ENCODE measurements at regions of chr1 and their contacts with region 1.

Region 1: GRCh38 chr1:40951943-40952743 is 27.4 kb upstream of the CTPS1 start:
- DNase-seq: peak; percentile 66
- H3K4me3 ChIP-seq: no peak overlapping the region
- H3K27ac ChIP-seq: no peak overlapping the region
- H3K4me1 ChIP-seq: peaks cover 11% of the 10 kb centered on the region
- H3K27me3 ChIP-seq: peaks cover 21% of the 10 kb centered on the region
- CTCF ChIP-seq: peak; percentile 96

Region 2: DNA sequence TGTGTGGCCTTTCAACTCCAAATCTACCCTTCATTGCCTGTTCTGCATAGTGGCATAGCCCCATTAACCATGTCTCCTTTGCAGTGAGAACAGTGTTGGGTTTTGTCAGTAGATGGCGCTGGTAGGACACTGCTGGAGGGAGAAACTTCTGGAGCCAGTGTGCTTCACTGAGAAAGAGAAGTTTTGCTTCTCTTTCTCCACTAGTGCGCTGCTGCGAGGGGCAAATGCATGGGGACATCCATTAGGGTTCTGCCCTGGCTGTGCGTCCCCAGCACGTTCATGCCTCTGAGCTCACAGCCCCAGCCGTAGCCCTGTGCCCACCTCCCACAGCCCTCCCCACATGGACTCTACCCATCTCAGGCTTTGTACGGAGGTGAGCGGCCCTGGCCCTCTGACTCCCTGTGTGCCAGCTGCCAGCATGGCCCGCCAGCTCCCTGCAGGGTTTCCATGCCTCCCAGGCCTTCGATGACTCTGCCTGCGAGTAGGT is 339.8 kb before region 1 on chr1:
- intact Hi-C with region 1: loop called (anchors 10 kb)
- DNase-seq: no peak
- H3K4me3 ChIP-seq: no peak overlapping the region
- H3K27ac ChIP-seq: no peak overlapping the region
- H3K4me1 ChIP-seq: no peaks in the 10 kb centered on the region
- H3K27me3 ChIP-seq: no peaks in the 10 kb centered on the region
- CTCF ChIP-seq: peak; percentile 85

Region 3: GRCh38 chr1:40774266-40774998 is 177.7 kb before region 1 on chr1:
- intact Hi-C with region 1: loop called (anchors 10 kb)
- DNase-seq: peak; percentile 58
- H3K4me3 ChIP-seq: no peak overlapping the region
- H3K27ac ChIP-seq: peak overlapping the region; percentile 17
- H3K4me1 ChIP-seq: peaks cover 18% of the 10 kb centered on the region
- H3K27me3 ChIP-seq: no peaks in the 10 kb centered on the region
- CTCF ChIP-seq: peak; percentile 85

Region 4: DNA sequence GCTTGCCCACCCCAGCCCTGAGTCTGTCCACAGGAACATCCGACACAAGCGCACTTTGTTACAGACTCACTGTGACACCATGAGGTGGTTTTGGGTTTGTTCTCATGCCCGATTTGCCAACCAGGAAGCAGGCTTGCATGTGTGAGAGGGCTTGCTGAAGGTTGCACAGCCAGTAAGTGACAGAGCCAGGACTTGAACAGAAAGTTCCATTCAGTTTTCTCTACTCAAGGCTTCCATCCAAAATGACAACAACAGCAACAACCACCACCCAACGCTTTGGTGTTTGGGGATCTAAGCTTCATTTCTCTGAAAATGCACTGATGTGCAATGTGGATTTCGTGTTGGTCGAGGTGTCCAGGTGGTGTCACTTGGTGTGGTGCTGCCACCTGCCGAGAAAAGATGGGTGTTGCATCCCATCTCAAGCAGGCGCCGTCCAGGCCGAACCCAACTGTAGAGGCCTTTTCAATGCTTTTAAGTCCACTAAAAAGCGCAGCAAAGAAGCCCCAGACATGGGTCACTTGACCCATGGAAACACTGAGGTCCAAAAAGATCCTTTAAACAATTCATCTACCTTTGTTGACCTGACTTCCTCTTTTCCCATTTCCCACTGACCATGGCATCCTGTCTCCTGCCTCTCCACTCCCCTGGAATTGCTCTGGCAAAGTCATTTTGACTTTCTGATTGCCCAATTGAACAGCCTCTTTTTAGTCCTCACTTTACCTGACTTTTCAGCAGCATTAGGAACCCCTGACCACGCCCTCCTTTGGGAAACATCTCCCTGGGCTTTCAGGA is 102.1 kb before region 1 on chr1:
- intact Hi-C with region 1: loop called (anchors 5 kb)
- DNase-seq: peak; percentile 62
- H3K4me3 ChIP-seq: no peak overlapping the region
- H3K27ac ChIP-seq: no peak overlapping the region
- H3K4me1 ChIP-seq: peaks cover 5% of the 10 kb centered on the region
- H3K27me3 ChIP-seq: no peaks in the 10 kb centered on the region
- CTCF ChIP-seq: peak; percentile 93

Region 5: DNA sequence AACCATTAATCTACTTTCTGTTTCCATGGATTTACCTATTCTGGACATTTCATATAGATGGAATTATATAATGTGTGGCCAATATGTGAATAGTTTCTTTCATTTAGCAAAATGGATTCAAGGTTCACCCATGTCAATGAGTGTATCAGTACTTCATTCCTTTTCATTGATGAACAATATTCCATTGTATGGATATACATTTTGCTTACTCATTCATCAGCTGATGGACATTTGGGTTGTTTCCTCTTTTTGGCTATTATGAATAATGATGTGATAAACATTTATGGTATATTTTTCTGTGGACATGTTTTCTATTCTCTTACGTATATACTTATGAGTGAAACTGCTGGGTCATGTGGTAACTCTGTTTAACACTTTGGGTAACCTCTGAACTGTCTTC is 192.1 kb after region 1 on chr1:
- intact Hi-C with region 1: no loop called
- DNase-seq: no peak
- H3K4me3 ChIP-seq: no peak overlapping the region
- H3K27ac ChIP-seq: no peak overlapping the region
- H3K4me1 ChIP-seq: no peaks in the 10 kb centered on the region
- H3K27me3 ChIP-seq: no peaks in the 10 kb centered on the region
- CTCF ChIP-seq: no peak